Pancreas (tissue), 10 donors: ENCODE measurements at regions of chr3 and their contacts with region 1.

Region 1: DNA sequence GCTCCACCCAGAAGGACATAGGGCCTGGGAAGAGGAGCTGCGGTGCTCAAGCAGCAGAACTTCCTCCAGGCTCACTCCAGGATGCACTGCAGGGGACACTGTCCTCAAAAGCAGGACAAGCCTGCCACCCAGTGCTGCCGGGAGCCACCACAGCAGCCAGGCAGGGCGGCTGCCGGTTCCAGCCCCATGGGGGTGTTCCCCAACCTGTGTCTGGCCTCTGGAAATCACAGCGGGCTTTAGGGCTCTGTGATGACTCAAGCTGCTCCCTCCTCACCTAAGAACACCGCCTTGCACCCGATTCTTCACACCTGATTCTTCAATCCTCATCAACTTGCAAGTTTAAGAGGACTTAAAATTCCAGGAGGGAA is 71.9 kb upstream of the SLC6A11 start:
- DNase-seq: no peak
- ATAC-seq: no peak
- H3K4me3 ChIP-seq: no peak overlapping the region
- H3K27ac ChIP-seq: no peak overlapping the region
- H3K4me1 ChIP-seq: no peaks in the 10 kb centered on the region
- H3K27me3 ChIP-seq: peaks cover 0 to 6% (median 0%) of the 10 kb centered on the region in 4 donors
- CTCF ChIP-seq: no peak

Region 2: GRCh38 chr3:10349801-10350200 is 394.3 kb before region 1 on chr3:
- intact Hi-C with region 1: loop called in 1 of 3 experiments (anchors 5 kb)
- DNase-seq: peak in 1 of 6 donors; percentile 19
- ATAC-seq: no peak
- H3K4me3 ChIP-seq: no peak overlapping the region
- H3K27ac ChIP-seq: no peak overlapping the region
- H3K4me1 ChIP-seq: no peaks in the 10 kb centered on the region
- H3K27me3 ChIP-seq: no peaks in the 10 kb centered on the region
- CTCF ChIP-seq: no peak

Region 3: GRCh38 chr3:10417849-10418248 is 326.2 kb before region 1 on chr3:
- intact Hi-C with region 1: loop called in 1 of 3 experiments (anchors 10 kb)
- DNase-seq: no peak
- ATAC-seq: peak in 1 of 4 donors; percentile 19
- H3K4me3 ChIP-seq: no peak overlapping the region
- H3K27ac ChIP-seq: no peak overlapping the region
- H3K4me1 ChIP-seq: no peaks in the 10 kb centered on the region
- H3K27me3 ChIP-seq: no peaks in the 10 kb centered on the region
- CTCF ChIP-seq: no peak

Region 4: GRCh38 chr3:10804183-10804648 is 60.1 kb after region 1 on chr3:
- intact Hi-C with region 1: no loop called
- DNase-seq: peak in 4 of 6 donors; percentile 60 to 78 (median 64)
- ATAC-seq: peak; percentile 96 to 100 (median 98)
- H3K4me3 ChIP-seq: no peak overlapping the region
- H3K27ac ChIP-seq: peak overlapping the region in 1 of 4 donors; percentile 38
- H3K4me1 ChIP-seq: no peaks in the 10 kb centered on the region
- H3K27me3 ChIP-seq: no peaks in the 10 kb centered on the region
- CTCF ChIP-seq: no peak

Region 5: DNA sequence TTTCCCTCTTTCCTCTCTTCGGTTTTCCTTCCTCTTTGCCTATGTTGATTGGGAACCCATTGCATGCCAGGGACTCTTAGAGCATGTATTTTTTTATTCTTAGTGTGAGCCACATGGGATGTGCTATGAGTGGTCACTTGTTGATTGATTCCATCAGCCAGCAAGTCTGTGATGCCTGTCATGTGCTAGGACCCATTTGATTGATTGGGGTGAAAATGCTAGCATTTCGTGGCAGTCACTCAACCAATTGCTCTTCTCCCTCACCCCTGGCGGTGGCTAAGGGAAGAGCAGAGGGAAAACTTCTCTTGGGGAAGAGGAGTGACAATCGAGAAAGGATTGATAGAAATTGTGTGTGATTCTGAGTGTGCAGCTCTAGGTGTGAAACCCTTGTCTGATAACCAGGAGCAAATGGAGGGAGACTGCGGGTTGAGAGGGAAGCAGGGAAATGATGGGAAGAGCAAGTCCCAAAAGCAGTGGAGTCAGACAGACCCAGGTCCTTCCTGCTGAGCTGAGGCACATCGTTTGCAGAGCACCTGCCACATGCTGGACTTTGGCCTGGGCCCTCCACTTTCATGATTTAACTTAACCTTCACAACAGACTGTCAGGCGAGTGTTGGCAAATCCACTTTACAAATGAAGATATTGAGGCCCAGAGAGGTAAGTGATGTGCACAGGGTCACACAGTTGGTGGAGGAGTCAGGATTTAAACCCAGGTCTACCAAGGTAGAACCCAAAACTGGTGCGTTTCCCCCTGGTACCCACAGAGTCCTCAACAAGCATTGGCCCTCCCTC is 112.0 kb after region 1 on chr3:
- intact Hi-C with region 1: no loop called
- DNase-seq: no peak
- ATAC-seq: no peak
- H3K4me3 ChIP-seq: no peak overlapping the region
- H3K27ac ChIP-seq: no peak overlapping the region
- H3K4me1 ChIP-seq: no peaks in the 10 kb centered on the region
- H3K27me3 ChIP-seq: no peaks in the 10 kb centered on the region
- CTCF ChIP-seq: peak in 1 of 4 donors; percentile 6